Mucosa of descending colon (tissue), 3 donors: ENCODE measurements at regions of chr11 and their contacts with region 1.

Region 1: DNA sequence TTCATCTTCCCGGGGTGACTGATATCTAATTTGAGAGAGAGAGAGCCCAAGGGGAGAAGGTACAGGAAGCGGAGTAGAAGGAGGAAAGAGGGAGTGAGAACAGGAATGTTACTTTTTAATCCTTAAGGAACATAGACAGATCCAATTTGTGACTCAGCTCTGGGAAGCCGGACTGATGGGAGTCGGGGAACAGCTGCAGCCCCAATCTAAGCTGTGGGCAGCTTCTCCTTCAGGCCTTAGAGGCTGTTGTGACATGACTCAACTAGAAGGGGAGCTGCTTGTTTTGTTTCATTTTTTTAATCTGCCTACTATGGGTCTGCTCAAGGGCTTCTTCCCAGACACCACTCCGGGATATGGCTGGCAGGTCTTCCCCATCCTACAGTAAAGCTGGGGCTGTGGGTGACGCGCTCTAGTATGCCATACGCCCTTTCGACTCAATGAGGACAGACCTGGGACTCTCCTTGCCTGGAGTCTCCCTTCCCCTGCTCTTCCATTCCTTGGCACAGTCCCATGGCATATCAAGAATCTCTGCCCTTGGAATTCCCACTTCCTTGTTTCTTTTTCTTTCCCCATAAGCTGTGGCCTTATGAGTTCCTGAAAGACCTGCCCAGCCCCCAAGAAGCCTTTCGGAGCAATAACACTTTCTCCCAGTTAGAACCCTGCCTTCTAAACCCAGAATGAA is 103.3 kb upstream of the AKIP1 start:
- DNase-seq: peak in 2 of 3 donors; percentile 58 to 76
- ATAC-seq: peak; percentile 73
- H3K4me3 ChIP-seq: no peak overlapping the region
- H3K4me1 ChIP-seq: peaks cover 30% of the 10 kb centered on the region
- CTCF ChIP-seq: no peak

Region 2: DNA sequence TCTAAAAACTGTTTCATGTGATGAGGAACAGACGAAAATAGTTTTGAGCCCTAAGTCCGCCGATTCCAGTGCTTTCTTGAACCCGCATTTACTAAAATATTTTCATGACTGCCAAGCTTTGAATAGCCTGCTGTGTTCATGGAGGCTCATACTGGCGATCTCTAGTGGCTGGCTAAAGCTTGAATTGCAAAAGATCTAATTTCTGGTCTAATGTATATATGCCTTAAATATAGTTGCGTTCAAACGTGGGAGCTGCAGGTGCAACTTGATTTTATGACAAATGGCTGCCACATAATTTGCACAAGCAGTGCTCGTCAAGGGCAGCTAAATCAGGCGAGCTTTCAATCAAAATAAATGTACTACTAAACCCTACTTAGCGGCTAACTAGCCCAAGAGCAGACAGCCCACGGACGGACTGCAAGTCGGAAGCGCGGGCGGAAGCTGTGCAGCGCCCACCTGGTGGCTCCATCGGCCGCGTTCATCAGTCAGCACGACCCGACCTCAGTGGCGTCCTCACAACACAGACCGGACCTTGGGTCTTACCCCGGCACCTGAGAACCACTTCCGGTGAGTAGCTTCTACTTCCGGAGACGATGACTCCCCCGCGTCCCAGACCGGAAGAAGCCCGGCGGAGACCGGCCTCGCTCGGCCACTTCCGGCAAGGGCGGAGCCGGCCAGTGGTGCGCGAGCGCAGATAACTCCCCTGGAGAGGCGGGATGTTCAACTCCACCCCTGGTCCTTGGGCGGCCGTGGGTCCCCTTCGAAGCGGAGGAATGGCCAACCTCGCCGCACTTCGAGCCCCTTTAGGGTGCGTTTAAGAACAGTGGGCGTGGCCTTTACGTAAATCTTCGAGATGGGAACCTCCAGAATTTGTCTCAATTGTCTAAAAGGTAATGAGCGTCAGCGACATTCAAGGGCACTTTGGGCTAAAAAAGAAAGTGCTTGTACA is 119.0 kb before region 1 on chr11:
- intact Hi-C with region 1: loop called in 1 of 2 experiments (anchors 5 kb)
- DNase-seq: peak; percentile 93 to 97 (median 96)
- ATAC-seq: peak; percentile 98
- H3K4me3 ChIP-seq: peak overlapping the region; percentile 36
- H3K4me1 ChIP-seq: peaks cover 21% of the 10 kb centered on the region
- CTCF ChIP-seq: peak; percentile 9

Region 3: GRCh38 chr11:8717876-8718753 is 89.6 kb before region 1 on chr11:
- intact Hi-C with region 1: loop called in 1 of 2 experiments (anchors 10 kb)
- DNase-seq: no peak
- ATAC-seq: no peak
- H3K4me3 ChIP-seq: no peak overlapping the region
- H3K4me1 ChIP-seq: peaks cover 27% of the 10 kb centered on the region
- CTCF ChIP-seq: no peak